ENCODE measurements at regions of chr11 and their contacts with region 1.

Region 1: DNA sequence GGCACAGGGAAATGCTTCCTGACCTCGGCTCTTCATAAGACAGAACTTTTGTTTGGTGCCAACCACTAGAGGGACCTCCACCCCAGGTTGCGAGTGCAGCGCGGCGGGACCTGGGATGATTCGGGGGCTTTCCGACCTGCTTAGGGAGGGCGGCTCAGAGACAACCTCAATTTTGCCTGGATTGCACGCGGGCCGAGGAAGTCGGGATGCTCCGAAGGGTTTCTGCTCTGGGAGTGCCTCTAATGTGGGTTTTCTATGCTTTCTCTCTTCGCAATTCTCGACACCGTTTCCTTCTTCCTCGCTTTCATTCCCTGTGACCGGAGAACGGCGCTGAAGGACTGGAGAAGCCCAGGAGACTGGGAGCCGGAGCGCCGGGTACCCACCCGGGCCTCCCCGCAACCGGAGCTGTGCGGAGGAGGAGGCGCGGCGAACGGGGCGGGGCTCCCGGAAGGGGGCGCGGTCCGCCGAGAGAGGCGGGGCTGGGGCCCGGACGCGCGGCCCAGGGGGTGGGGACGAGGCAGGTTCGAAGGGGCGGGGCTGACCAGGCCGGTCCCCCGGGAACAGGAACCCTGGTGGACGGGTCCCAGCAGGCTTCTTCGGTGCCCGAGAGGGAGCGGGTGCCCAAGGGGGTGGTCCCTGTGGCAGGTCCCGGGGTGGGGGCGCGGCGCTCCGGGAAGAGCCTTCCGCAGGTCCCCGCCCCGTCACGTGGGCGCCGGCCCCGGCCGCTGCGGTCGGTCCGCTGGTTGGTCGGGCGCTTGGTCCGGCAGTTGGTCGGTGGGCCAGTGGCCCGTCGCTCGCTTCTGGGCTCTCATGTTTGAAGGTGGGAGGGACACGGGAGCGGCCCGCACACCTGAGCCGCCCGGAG is at the start of gene PPFIBP2:
- DNase-seq: peak; percentile 86
- H3K4me3 Mint-ChIP-seq: peak within 1 kb of the TSS; percentile 89
- H3K27ac Mint-ChIP-seq: peak within 1 kb of the TSS; percentile 87
- H3K4me1 Mint-ChIP-seq: peaks cover 34% of the 10 kb centered on the region
- H3K27me3 Mint-ChIP-seq: peaks cover 23% of the 10 kb centered on the region
- total RNA-seq, gene PPFIBP2: 21.9 to 24.7 TPM

Region 2: DNA sequence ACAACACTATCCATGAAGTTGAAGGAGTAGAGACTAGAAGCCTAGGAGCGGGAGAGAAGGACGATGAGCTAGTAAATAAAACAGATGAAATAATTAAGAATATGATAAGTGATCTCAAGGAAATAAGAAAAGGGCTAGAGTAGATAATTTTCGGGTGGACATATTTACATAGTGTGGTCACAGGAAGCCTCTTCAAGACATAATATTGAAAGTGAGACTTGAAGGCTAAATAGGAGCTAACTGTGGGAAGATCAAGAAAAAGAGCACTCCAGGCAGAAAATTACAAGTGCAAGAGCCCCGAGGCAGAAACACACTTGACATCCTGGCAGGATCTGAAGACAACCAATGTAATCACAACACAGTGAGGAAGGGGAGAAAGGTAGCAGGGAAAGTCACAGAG is 11.6 kb before region 1 on chr11:
- CTCF ChIA-PET with region 1: no interaction called
- POLR2A ChIA-PET with region 1: no interaction called
- DNase-seq: no peak
- H3K4me3 Mint-ChIP-seq: no peak overlapping the region
- H3K27ac Mint-ChIP-seq: no peak overlapping the region
- H3K4me1 Mint-ChIP-seq: no peaks in the 10 kb centered on the region
- H3K27me3 Mint-ChIP-seq: peaks cover 11% of the 10 kb centered on the region

Region 3: GRCh38 chr11:7524462-7525235 is 11.2 kb after region 1 on chr11:
- CTCF ChIA-PET with region 1: interaction called, 29 read pairs
- POLR2A ChIA-PET with region 1: interaction called, 7 read pairs
- DNase-seq: no peak
- H3K4me3 Mint-ChIP-seq: no peak overlapping the region
- H3K27ac Mint-ChIP-seq: no peak overlapping the region
- H3K4me1 Mint-ChIP-seq: peaks cover 61% of the 10 kb centered on the region
- H3K27me3 Mint-ChIP-seq: peaks cover 2% of the 10 kb centered on the region

Region 4: GRCh38 chr11:7538031-7538430 is 24.6 kb after region 1 on chr11:
- CTCF ChIA-PET with region 1: interaction called, 39 read pairs
- POLR2A ChIA-PET with region 1: interaction called, 7 read pairs
- DNase-seq: peak; percentile 66
- H3K4me3 Mint-ChIP-seq: peak overlapping the region; percentile 63
- H3K27ac Mint-ChIP-seq: peak overlapping the region; percentile 75
- H3K4me1 Mint-ChIP-seq: peaks cover 77% of the 10 kb centered on the region
- H3K27me3 Mint-ChIP-seq: peaks cover 20% of the 10 kb centered on the region

Region 5: GRCh38 chr11:7548659-7549274 is 35.3 kb after region 1 on chr11:
- CTCF ChIA-PET with region 1: interaction called, 27 read pairs
- POLR2A ChIA-PET with region 1: no interaction called
- DNase-seq: peak; percentile 49
- H3K4me3 Mint-ChIP-seq: no peak overlapping the region
- H3K27ac Mint-ChIP-seq: no peak overlapping the region
- H3K4me1 Mint-ChIP-seq: peaks cover 5% of the 10 kb centered on the region
- H3K27me3 Mint-ChIP-seq: no peaks in the 10 kb centered on the region

Region 6: DNA sequence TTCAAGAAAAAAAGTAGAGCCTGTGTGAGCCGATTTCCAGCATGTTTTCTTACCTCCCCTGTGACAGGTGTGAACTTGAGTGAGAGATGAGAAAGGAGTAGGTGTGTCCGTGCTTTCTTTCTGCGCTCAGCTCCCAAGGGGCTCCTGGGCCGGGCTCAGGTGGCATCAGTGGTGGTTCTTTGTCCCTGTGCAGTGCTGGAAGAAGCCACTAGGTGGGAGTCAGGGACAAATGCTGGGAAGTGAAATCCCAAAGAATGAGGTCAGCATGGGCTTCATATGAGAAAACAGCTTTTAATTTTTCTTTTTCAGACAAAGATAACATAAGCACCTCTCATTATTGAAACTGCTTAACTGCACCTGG is 58.2 kb after region 1 on chr11:
- CTCF ChIA-PET with region 1: interaction called, 13 read pairs
- POLR2A ChIA-PET with region 1: no interaction called
- DNase-seq: peak; percentile 31
- H3K4me3 Mint-ChIP-seq: no peak overlapping the region
- H3K27ac Mint-ChIP-seq: no peak overlapping the region
- H3K4me1 Mint-ChIP-seq: peaks cover 24% of the 10 kb centered on the region
- H3K27me3 Mint-ChIP-seq: peaks cover 13% of the 10 kb centered on the region

Region 7: DNA sequence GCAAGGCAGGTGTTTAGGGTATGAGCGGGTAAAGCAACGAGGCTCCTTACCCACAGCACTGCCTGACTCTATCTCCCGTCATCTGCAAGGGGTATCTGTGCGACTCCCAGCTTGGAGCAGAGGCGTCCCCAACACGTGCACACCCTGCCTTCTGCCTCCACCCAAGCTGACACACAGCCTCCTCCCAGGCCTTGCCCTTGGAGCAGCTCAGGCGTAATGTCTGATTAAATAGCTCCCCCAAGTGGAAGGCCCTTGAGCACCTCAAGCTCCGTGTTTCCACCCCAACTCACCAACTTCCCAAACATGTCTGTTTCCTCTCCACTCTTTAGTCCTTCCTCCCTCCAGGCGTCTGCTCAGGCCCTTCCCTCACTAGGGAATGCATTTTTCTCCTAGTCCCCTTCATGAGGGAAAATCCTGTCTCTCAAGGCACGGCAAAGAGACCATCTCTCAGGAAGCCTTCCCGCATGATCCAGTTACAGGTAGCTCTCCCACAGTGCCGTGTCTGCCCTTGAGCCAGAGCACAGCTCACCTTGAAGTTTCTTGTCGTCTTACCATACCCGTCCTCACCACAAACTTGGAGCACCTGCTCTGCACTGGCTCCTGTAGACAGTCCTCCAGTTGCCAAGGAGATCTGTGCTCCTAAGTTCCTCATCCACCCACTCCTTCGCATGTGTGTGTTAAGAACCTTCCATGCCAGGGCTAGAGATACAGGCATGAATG is 144.0 kb after region 1 on chr11:
- CTCF ChIA-PET with region 1: interaction called, 46 read pairs
- POLR2A ChIA-PET with region 1: interaction called, 3 read pairs
- DNase-seq: peak; percentile 54
- H3K4me3 Mint-ChIP-seq: no peak overlapping the region
- H3K27ac Mint-ChIP-seq: no peak overlapping the region
- H3K4me1 Mint-ChIP-seq: no peaks in the 10 kb centered on the region
- H3K27me3 Mint-ChIP-seq: no peaks in the 10 kb centered on the region

Region 8: GRCh38 chr11:7665473-7666291 is 152.2 kb after region 1 on chr11:
- CTCF ChIA-PET with region 1: interaction called, 36 read pairs
- POLR2A ChIA-PET with region 1: interaction called, 3 read pairs
- DNase-seq: peak; percentile 79
- H3K4me3 Mint-ChIP-seq: no peak overlapping the region
- H3K27ac Mint-ChIP-seq: no peak overlapping the region
- H3K4me1 Mint-ChIP-seq: peaks cover 3% of the 10 kb centered on the region
- H3K27me3 Mint-ChIP-seq: no peaks in the 10 kb centered on the region